Activated T-helper 1 cell treated with anti-CD3 and anti-CD28 coated beads, Interleukin-12 subunit alpha, Interleukin-12 subunit beta, Interleukin-2, Interleukin-4 antibody, amounts not matched to agents 30 ng/mL and 10 ng/mL and 1 ng/mL, durations not matched to agents 14 hours and 24 hours and 36 hours (primary cell): ENCODE measurements at regions of chr3 and their contacts with region 1.

Region 1: GRCh38 chr3:14467814-14468620 is 65.6 kb downstream of the SLC6A6 start:
- DNase-seq: peak; percentile 23
- H3K4me3 Mint-ChIP-seq: no peak overlapping the region
- H3K27ac Mint-ChIP-seq: peak overlapping the region; percentile 63
- H3K4me1 Mint-ChIP-seq: peaks cover under 1% of the 10 kb centered on the region
- H3K27me3 Mint-ChIP-seq: no peaks in the 10 kb centered on the region

Region 2: GRCh38 chr3:14203521-14204079 is 264.4 kb before region 1 on chr3:
- intact Hi-C with region 1: loop called (anchors 1 kb)
- DNase-seq: peak; percentile 11
- H3K4me3 Mint-ChIP-seq: no peak overlapping the region
- H3K27ac Mint-ChIP-seq: no peak overlapping the region
- H3K4me1 Mint-ChIP-seq: peaks cover 4% of the 10 kb centered on the region
- H3K27me3 Mint-ChIP-seq: no peaks in the 10 kb centered on the region

Region 3: DNA sequence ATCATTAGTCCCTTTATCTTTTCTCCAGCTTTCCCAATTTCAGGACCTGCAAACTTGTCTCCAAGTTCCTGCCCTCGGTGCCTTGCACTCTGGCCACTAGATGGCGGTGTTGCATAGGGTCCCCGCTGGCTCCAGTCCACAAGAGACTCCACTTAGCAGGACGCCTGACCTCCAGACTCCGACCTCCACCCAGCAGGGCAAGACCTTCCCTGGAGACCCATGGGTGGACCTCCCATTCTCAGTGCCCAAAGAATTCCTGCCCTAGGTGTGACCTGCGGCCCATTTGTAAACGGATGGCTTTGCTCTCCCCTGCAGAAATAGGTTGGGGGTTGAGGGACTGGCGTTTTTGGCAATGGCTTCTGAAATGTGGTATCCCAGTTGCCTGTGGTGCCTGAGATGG is 206.8 kb before region 1 on chr3:
- intact Hi-C with region 1: loop called (anchors 1 kb)
- DNase-seq: peak; percentile 56
- H3K4me3 Mint-ChIP-seq: no peak overlapping the region
- H3K27ac Mint-ChIP-seq: no peak overlapping the region
- H3K4me1 Mint-ChIP-seq: no peaks in the 10 kb centered on the region
- H3K27me3 Mint-ChIP-seq: peaks cover 11% of the 10 kb centered on the region